ENCODE measurements at regions of chr7 and their contacts with region 1.

Region 1: DNA sequence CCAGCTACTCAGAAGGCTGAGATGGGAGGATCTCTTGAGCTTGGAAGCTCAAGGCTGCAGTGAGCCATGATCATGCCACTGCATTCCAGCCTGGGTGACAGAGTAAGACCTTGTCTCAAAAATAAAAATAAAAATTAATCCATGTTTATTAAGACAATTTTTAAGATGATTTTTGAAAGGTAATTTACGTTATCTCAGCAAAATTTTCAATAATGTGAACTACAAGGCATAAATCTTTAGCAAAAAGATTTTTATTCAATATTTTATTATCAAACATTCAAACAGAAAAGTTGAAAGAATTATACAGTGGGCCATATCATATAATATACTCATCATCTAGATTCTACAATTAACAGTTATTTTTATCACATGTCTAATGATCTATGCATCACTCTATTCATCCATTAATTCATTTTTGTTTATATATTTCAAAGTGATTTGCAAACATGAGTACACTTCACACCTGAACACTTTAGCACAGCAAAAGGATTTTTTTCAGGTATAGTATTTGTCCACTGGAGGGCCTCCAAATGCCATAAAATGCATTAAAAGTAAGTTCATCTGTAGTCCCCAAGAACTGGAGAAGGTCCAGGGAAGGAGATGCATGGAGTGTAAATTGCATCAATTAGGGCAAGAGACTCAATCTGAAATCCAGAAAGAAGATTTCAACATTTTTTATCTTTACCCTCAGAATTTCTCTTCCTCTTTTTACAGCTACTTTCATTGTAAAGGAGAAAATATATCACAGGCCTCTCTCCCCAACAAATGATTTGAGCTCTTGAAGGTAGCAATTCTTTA is 38.6 kb upstream of the RSBN1L start:
- DNase-seq: peak; percentile 57
- H3K4me3 ChIP-seq: no peak overlapping the region
- H3K27ac ChIP-seq: no peak overlapping the region
- H3K4me1 ChIP-seq: no peaks in the 10 kb centered on the region
- H3K27me3 ChIP-seq: no peaks in the 10 kb centered on the region
- CTCF ChIP-seq: peak in 1 of 2 donors; percentile 25
- POLR2A ChIP-seq: no peak

Region 2: DNA sequence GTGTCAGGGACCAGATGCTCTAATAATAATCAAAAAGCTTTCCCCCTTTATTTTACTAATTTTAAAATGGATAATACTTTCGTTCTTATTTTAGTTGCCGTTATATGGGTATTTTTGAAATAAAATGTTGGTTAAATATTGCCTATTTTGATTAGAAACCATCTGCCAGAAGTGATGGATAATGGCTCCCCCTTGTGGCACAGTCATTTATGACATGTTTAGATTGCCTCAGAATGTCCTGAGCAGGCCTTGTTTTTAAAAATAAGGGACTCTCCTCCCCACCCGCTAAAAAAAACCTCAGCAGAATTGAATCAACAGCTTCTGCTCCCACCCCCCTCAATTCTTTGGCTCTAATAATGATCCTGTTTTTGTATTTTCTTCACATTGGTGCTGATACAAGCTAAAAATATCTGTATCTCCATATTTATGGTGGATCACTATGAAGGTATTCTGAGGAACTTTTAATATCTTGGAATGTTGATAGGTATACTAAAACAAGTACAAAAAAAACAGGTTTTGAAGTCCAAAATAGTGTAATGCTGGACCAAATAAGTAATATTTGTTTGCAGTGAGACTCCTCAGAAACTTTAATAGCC is 101.8 kb after region 1 on chr7:
- CTCF ChIA-PET with region 1: interaction called, 43 read pairs
- POLR2A ChIA-PET with region 1: no interaction called
- dilution Hi-C with region 1: no loop called
- intact Hi-C with region 1: loop called (anchors 1 kb)
- DNase-seq: peak; percentile 82
- H3K4me3 ChIP-seq: no peak overlapping the region
- H3K27ac ChIP-seq: no peak overlapping the region
- H3K4me1 ChIP-seq: no peaks in the 10 kb centered on the region
- H3K27me3 ChIP-seq: no peaks in the 10 kb centered on the region
- CTCF ChIP-seq: peak; percentile 55 to 66
- POLR2A ChIP-seq: no peak

Region 3: GRCh38 chr7:78039790-78040776 is 382.5 kb after region 1 on chr7:
- CTCF ChIA-PET with region 1: interaction called, 4 read pairs
- POLR2A ChIA-PET with region 1: no interaction called
- dilution Hi-C with region 1: no loop called
- intact Hi-C with region 1: loop called (anchors 10 kb)
- DNase-seq: peak; percentile 6
- H3K4me3 ChIP-seq: no peak overlapping the region
- H3K27ac ChIP-seq: no peak overlapping the region
- H3K4me1 ChIP-seq: no peaks in the 10 kb centered on the region
- H3K27me3 ChIP-seq: peaks cover 2 to 11% of the 10 kb centered on the region in 2 experiments
- CTCF ChIP-seq: peak; percentile 72 to 78
- POLR2A ChIP-seq: no peak